ENCODE measurements at regions of chr18 and their contacts with region 1.

Region 1: DNA sequence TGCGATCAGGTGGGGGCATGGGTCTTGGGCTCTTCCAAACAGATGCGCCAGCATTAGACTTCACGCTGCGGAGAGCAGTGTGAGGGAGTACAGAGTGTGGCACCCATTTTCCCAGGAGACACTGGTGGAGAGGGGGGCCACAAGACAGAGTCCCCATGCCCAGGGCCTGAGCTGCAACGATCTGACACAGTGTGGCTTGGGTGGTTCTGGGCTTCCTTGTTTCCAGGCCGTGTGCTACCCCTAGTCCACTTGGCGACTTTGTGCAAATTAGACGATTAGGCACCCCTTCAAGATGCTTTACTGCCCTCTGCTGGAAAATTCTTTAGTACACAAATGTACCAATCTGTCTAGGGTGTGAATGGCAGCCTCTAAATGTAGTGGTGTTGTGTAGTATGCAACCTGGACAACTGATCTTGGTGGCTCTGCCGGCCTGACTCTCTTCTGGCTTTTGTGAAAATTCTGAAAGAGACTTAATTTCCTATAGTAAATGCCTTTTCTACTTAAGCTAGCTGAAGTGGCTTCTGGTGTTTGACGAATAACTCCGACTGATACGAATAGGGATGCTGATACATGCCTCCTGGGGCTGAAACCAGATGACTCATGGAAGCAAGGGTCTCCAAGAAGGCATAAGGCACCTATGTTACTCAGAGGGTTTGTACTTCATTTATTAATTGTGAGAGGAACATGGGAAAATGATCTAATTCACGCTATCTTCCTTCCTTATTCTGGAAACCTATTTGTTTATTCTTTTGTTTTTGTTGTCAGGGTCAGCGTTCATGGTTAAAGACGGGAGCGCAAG is 92.3 kb upstream of the SMAD2 start:
- ATAC-seq: peak; percentile 31 to 88 (median 58)
- H3K4me3 ChIP-seq: no peak overlapping the region
- H3K27ac ChIP-seq: peak overlapping the region; percentile 89 to 92
- H3K4me1 ChIP-seq: peaks cover 35% of the 10 kb centered on the region in 2 donors

Region 2: DNA sequence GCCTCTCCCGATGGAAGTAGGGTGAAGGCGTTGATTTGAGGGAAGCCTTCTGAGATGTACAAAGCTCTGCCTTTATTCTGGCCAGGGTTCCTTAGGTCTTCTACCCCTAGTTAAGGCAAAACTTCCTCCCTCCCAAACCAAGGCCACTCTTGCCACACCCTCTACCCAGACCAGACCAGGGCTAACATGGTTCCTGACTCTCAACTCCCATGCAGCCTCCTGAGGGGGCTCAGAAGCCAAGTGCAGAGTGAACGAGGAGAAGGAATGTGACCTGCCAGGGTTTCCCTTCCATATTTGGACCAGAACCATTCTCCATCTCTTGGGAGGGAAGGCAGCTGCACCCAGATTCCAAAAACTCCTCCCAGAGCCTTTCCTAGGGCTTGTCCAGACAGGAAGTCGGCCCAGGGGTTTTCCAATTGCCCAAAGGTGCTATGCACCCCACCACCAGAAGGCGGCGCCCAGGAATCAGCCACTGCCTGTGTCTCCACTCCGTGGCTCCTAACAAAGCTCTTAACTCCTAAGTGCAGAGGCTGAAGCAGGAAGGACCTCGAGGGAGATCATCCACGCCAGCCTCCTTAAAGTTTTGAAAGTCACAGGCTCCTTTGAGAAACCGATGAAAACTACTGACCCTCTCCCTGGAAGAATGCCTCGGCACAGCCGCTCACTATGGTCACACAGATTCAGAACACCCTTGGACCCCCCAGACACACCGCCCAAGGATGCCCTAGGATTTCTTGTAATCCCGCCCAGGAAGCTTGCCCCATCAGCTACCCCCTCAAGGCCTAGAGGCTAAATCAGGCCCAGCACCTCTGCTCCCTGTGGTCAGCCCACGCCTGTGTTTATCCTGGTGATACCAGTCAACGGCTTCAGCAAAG is 250.1 kb before region 1 on chr18:
- in situ Hi-C with region 1: loop called in 2 of 9 experiments (anchors 10 to 25 kb)
- ATAC-seq: peak in 3 of 8 experiments; percentile 85 to 92 (median 87)
- H3K4me3 ChIP-seq: no peak overlapping the region
- H3K27ac ChIP-seq: no peak overlapping the region
- H3K4me1 ChIP-seq: no peaks in the 10 kb centered on the region

Region 3: GRCh38 chr18:48834413-48835031 is 811.8 kb after region 1 on chr18:
- in situ Hi-C with region 1: no loop called
- ATAC-seq: peak in 4 of 8 experiments; percentile 18 to 81 (median 53)
- H3K4me3 ChIP-seq: no peak overlapping the region
- H3K27ac ChIP-seq: no peak overlapping the region
- H3K4me1 ChIP-seq: peaks cover 15 to 27% of the 10 kb centered on the region in 2 donors